ENCODE measurements at regions of chr11 and their contacts with region 1.

Region 1: GRCh38 chr11:34105079-34105956 is at the start of gene NAT10:
- DNase-seq: peak; percentile 94 to 100 (median 97)
- ATAC-seq: peak; percentile 90
- H3K4me3 ChIP-seq: peak within 1 kb of the TSS; percentile 81
- H3K4me3 Mint-ChIP-seq: peak within 1 kb of the TSS; percentile 95
- H3K27ac ChIP-seq: peak within 1 kb of the TSS; percentile 91 to 95
- H3K27ac Mint-ChIP-seq: peak within 1 kb of the TSS; percentile 99
- H3K4me1 ChIP-seq: peaks cover 31% of the 10 kb centered on the region
- H3K4me1 Mint-ChIP-seq: peaks cover 69% of the 10 kb centered on the region
- H3K27me3 ChIP-seq: no peaks in the 10 kb centered on the region
- H3K27me3 Mint-ChIP-seq: peaks cover 4% of the 10 kb centered on the region
- CTCF ChIP-seq: no peak
- total RNA-seq, gene NAT10: 50.1 to 55.6 TPM

Region 2: GRCh38 chr11:33475993-33476392 is 629.3 kb before region 1 on chr11:
- CTCF ChIA-PET with region 1: no interaction called
- POLR2A ChIA-PET with region 1: no interaction called
- intact Hi-C with region 1: no loop called
- DNase-seq: no peak
- ATAC-seq: no peak
- H3K4me3 ChIP-seq: no peak overlapping the region
- H3K4me3 Mint-ChIP-seq: no peak overlapping the region
- H3K27ac ChIP-seq: no peak overlapping the region
- H3K27ac Mint-ChIP-seq: no peak overlapping the region
- H3K4me1 ChIP-seq: no peaks in the 10 kb centered on the region
- H3K4me1 Mint-ChIP-seq: no peaks in the 10 kb centered on the region
- H3K27me3 ChIP-seq: peaks cover 0 to 12% of the 10 kb centered on the region in 2 experiments
- H3K27me3 Mint-ChIP-seq: peaks cover 24% of the 10 kb centered on the region
- CTCF ChIP-seq: no peak

Region 3: GRCh38 chr11:33773987-33774735 is 331.2 kb before region 1 on chr11 and contains the start of gene FBXO3:
- CTCF ChIA-PET with region 1: no interaction called
- POLR2A ChIA-PET with region 1: interaction called, 6 read pairs
- intact Hi-C with region 1: loop called in 1 of 2 experiments (anchors 2 kb)
- DNase-seq: peak; percentile 78 to 95 (median 86)
- ATAC-seq: peak; percentile 86
- H3K4me3 ChIP-seq: peak within 1 kb of the TSS; percentile 73
- H3K4me3 Mint-ChIP-seq: peak within 1 kb of the TSS; percentile 97
- H3K27ac ChIP-seq: peak within 1 kb of the TSS; percentile 64 to 75
- H3K27ac Mint-ChIP-seq: peak within 1 kb of the TSS; percentile 97
- H3K4me1 ChIP-seq: peaks cover 41% of the 10 kb centered on the region
- H3K4me1 Mint-ChIP-seq: peaks cover 61% of the 10 kb centered on the region
- H3K27me3 ChIP-seq: peaks cover 0 to 7% of the 10 kb centered on the region in 2 experiments
- H3K27me3 Mint-ChIP-seq: peaks cover 8% of the 10 kb centered on the region
- CTCF ChIP-seq: no peak
- total RNA-seq, gene FBXO3: 62.0 to 63.4 TPM

Region 4: GRCh38 chr11:34075178-34075820 is 30.0 kb before region 1 on chr11:
- CTCF ChIA-PET with region 1: interaction called, 3 read pairs
- POLR2A ChIA-PET with region 1: interaction called, 4 read pairs
- intact Hi-C with region 1: loop called in 1 of 2 experiments (anchors 5 kb)
- DNase-seq: no peak
- ATAC-seq: no peak
- H3K4me3 ChIP-seq: no peak overlapping the region
- H3K4me3 Mint-ChIP-seq: no peak overlapping the region
- H3K27ac ChIP-seq: peak overlapping the region; percentile 1 to 13
- H3K27ac Mint-ChIP-seq: peak overlapping the region; percentile 67
- H3K4me1 ChIP-seq: peaks cover 14% of the 10 kb centered on the region
- H3K4me1 Mint-ChIP-seq: peaks cover 57% of the 10 kb centered on the region
- H3K27me3 ChIP-seq: no peaks in the 10 kb centered on the region
- H3K27me3 Mint-ChIP-seq: no peaks in the 10 kb centered on the region
- CTCF ChIP-seq: no peak

Region 5: GRCh38 chr11:34091825-34092224 is 13.5 kb before region 1 on chr11:
- CTCF ChIA-PET with region 1: no interaction called
- POLR2A ChIA-PET with region 1: interaction called, 13 read pairs
- intact Hi-C with region 1: loop called in 1 of 2 experiments (anchors 2 kb)
- DNase-seq: no peak
- ATAC-seq: no peak
- H3K4me3 ChIP-seq: no peak overlapping the region
- H3K4me3 Mint-ChIP-seq: no peak overlapping the region
- H3K27ac ChIP-seq: no peak overlapping the region
- H3K27ac Mint-ChIP-seq: no peak overlapping the region
- H3K4me1 ChIP-seq: no peaks in the 10 kb centered on the region
- H3K4me1 Mint-ChIP-seq: peaks cover 3% of the 10 kb centered on the region
- H3K27me3 ChIP-seq: no peaks in the 10 kb centered on the region
- H3K27me3 Mint-ChIP-seq: no peaks in the 10 kb centered on the region
- CTCF ChIP-seq: no peak

Region 6: GRCh38 chr11:34203377-34203871 is 98.1 kb after region 1 on chr11:
- CTCF ChIA-PET with region 1: no interaction called
- POLR2A ChIA-PET with region 1: no interaction called
- intact Hi-C with region 1: no loop called
- DNase-seq: no peak
- ATAC-seq: no peak
- H3K4me3 ChIP-seq: no peak overlapping the region
- H3K4me3 Mint-ChIP-seq: no peak overlapping the region
- H3K27ac ChIP-seq: no peak overlapping the region
- H3K27ac Mint-ChIP-seq: no peak overlapping the region
- H3K4me1 ChIP-seq: peaks cover 11% of the 10 kb centered on the region
- H3K4me1 Mint-ChIP-seq: peaks cover 15% of the 10 kb centered on the region
- H3K27me3 ChIP-seq: no peaks in the 10 kb centered on the region
- H3K27me3 Mint-ChIP-seq: no peaks in the 10 kb centered on the region
- CTCF ChIP-seq: no peak

Region 7: DNA sequence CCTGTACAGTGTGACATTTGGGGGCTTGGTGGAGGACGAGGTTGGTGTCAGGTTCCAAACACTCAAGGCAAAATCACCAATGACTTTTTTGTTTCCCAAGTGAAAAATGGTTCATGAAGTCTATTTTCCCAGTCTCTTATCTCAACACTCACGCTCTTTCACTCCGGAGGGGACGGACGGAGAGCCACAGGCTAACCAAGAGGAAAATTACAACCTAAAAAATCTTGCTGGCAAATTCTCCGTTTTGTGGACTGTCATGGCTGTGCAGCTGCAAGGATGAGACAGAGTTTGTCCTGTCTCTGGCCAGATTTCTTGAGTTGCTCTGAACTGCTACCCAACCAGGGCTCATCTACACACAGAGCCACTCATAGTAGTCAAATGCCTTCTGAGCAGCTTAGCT is 151.3 kb after region 1 on chr11:
- CTCF ChIA-PET with region 1: no interaction called
- POLR2A ChIA-PET with region 1: no interaction called
- intact Hi-C with region 1: no loop called
- DNase-seq: no peak
- ATAC-seq: no peak
- H3K4me3 ChIP-seq: no peak overlapping the region
- H3K4me3 Mint-ChIP-seq: no peak overlapping the region
- H3K27ac ChIP-seq: no peak overlapping the region
- H3K27ac Mint-ChIP-seq: no peak overlapping the region
- H3K4me1 ChIP-seq: peaks cover 4% of the 10 kb centered on the region
- H3K4me1 Mint-ChIP-seq: peaks cover 14% of the 10 kb centered on the region
- H3K27me3 ChIP-seq: no peaks in the 10 kb centered on the region
- H3K27me3 Mint-ChIP-seq: peaks cover 3% of the 10 kb centered on the region
- CTCF ChIP-seq: no peak

Region 8: DNA sequence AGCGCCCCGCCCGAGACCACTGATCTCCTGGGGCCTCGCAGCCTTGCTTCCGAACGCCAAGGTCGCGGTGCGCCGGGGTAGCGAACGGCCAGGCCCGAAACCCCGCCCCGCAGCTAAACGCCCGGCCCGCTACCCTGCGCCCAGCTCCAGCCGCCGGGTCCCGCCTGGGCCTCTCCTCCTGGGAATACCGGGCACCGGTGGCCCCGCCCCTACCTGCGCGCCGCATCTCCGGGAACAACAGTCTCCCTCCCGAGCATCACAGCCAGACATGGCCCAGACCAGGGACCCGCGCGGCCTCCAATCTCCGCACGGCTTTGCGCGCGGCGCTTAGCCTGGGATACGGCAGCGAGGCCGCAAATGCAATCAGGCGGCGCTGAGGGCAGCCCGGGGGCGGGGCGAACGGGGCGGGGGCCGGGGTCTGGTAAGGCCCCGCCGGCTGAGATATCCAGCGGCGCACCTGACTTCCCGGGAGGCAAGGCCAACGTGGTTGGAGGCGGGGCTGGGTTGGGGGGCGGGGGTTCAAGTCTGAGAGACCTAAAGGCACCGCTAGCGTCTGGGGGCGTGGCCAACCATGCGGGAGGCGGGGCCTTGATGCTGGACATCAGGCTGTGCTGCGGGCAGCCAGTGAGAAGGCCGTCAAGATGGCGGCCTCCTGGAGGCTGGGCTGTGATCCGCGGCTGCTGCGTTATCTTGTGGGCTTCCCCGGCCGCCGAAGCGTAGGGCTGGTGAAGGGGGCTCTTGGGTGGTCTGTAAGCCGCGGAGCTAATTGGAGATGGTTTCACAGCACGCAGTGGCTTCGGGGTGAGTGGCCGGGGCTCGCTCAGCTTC is 810.9 kb after region 1 on chr11 and contains the starts of genes APIP and PDHX:
- CTCF ChIA-PET with region 1: interaction called, 3 read pairs
- POLR2A ChIA-PET with region 1: interaction called, 14 read pairs
- intact Hi-C with region 1: loop called (anchors 5 kb)
- DNase-seq: peak; percentile 91 to 99 (median 95)
- ATAC-seq: peak; percentile 90
- H3K4me3 ChIP-seq: peak within 1 kb of the TSS; percentile 94
- H3K4me3 Mint-ChIP-seq: peak within 1 kb of the TSS; percentile 96
- H3K27ac ChIP-seq: peak within 1 kb of the TSS; percentile 80 to 93
- H3K27ac Mint-ChIP-seq: peak within 1 kb of the TSS; percentile 93
- H3K4me1 ChIP-seq: peaks cover 24% of the 10 kb centered on the region
- H3K4me1 Mint-ChIP-seq: peaks cover 57% of the 10 kb centered on the region
- H3K27me3 ChIP-seq: no peaks in the 10 kb centered on the region
- H3K27me3 Mint-ChIP-seq: no peaks in the 10 kb centered on the region
- CTCF ChIP-seq: no peak
- total RNA-seq, gene APIP: 7.1 to 8.3 TPM
- total RNA-seq, gene PDHX: 17.3 to 17.4 TPM

Measured in CD4-positive, alpha-beta T cell (primary cell).